ENCODE measurements at regions of chr3 and their contacts with region 1.

Region 1: DNA sequence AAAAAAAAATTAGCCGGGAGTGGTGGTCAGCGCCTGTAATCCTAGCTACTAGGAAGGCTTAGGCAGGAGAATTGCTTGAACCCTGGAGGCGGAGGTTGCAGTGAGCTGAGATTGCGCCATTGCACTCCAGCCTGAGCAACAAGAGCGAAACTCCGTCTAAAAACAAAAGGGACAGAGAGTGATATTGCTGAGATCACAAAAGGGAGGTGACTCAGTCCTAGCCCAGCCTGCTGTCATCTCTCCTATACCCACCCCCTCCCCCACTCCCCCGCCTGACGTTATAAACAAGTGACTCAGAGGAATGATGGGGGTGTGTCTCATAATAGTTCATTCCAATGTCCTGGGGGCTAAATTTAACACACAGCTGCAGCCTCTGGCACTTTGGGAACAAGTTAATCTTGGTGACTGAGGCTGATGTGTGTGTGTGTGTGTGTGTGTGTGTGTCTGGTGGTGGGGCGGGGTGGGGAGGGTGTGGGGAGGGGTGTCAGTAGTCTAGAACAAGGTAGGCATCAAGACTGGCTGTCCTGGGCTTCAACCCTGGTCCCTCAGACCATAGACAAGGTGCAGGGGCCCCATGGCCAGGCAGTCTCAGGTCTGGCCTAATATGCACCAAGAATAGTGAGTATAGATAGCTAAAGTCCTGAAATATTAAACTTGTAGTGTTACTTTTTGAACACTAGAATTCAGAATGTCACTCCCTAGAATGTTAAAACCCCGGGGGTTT is 1.3 kb upstream of the KLHL40 start:
- DNase-seq: no peak
- ATAC-seq: peak in 2 of 4 donors; percentile 24 to 88
- H3K4me3 ChIP-seq: no peak overlapping the region
- H3K27ac ChIP-seq: no peak overlapping the region
- H3K4me1 ChIP-seq: no peaks in the 10 kb centered on the region
- H3K27me3 ChIP-seq: no peaks in the 10 kb centered on the region
- CTCF ChIP-seq: no peak
- POLR2A ChIP-seq: no peak

Region 2: GRCh38 chr3:42732829-42733459 is 48.9 kb after region 1 on chr3:
- intact Hi-C with region 1: loop called in 1 of 2 experiments (anchors 10 kb)
- DNase-seq: no peak
- ATAC-seq: no peak
- H3K4me3 ChIP-seq: no peak overlapping the region
- H3K27ac ChIP-seq: no peak overlapping the region
- H3K4me1 ChIP-seq: no peaks in the 10 kb centered on the region
- H3K27me3 ChIP-seq: no peaks in the 10 kb centered on the region
- CTCF ChIP-seq: no peak
- POLR2A ChIP-seq: no peak

Measured in right lobe of liver (tissue), 6 donors.